ENCODE measurements at regions of chr17 and their contacts with region 1.

Region 1: DNA sequence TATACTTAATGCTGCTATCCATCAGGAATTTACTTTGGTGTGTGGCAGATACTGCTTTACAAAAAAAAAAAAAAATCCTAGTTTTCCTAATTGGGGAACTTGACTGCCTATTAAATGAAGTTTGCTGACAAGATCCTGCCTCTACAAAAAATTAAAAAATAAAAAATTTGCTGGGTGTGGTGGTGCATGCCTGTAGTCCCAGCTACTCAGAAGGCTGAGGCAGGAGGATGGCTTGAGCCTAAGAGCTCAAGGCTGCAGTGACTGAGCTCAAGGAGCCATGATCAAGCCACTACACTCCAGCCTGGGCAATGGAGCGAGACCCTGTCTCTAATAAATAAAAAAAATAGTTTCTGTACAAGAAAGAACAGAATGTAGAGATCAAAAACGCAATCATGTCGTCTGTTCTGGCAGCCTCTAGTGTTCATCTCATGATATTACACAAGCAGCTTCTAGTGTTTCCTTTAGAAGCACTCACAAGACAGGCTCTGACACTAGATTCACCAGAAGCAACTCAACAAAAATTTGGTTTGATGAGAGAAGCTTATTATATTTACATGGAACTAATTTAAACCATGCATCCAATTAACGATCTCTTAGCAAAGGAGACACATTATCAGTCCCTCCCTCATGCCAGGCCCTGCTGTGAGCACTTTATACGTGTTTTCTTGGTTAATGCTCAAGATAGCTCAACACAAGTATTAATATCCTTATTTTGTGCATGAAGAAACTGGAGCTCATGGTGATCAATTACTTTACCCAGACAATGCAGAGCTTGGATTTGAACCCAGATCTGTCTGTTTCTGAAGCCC is 6.8 kb upstream of the KRTAP17-1 start:
- DNase-seq: peak in 1 of 3 donors; percentile 18
- ATAC-seq: peak; percentile 70
- H3K4me3 ChIP-seq: no peak overlapping the region
- H3K4me1 ChIP-seq: no peaks in the 10 kb centered on the region
- CTCF ChIP-seq: peak; percentile 63

Region 2: GRCh38 chr17:40909351-40909750 is 412.9 kb before region 1 on chr17:
- intact Hi-C with region 1: loop called in 1 of 2 experiments (anchors 5 kb)
- DNase-seq: peak; percentile 68 to 83 (median 78)
- ATAC-seq: peak; percentile 92
- H3K4me3 ChIP-seq: no peak overlapping the region
- H3K4me1 ChIP-seq: peaks cover 7% of the 10 kb centered on the region
- CTCF ChIP-seq: peak; percentile 41